PC-9 (cell line): ENCODE measurements at regions of chr3 and their contacts with region 1.

Region 1: GRCh38 chr3:196108083-196108743 is 26.3 kb upstream of the TFRC start:
- DNase-seq: peak; percentile 94 to 99
- H3K4me3 ChIP-seq: peak overlapping the region; percentile 36; the same call in 1 of the 2 replicates
- H3K27ac ChIP-seq: peak overlapping the region; percentile 94
- H3K4me1 ChIP-seq: peaks cover 52% of the 10 kb centered on the region
- H3K27me3 ChIP-seq: no peaks in the 10 kb centered on the region
- CTCF ChIP-seq: no peak; the same call in 1 of the 2 replicates

Region 2: GRCh38 chr3:196081791-196082618 is 26.2 kb before region 1 on chr3 and contains the start of gene TFRC:
- CTCF ChIA-PET with region 1: interaction called, 8 read pairs
- POLR2A ChIA-PET with region 1: interaction called, 3 read pairs
- intact Hi-C with region 1: loop called (anchors 1 kb)
- DNase-seq: peak; percentile 94 to 98
- H3K4me3 ChIP-seq: peak within 1 kb of the TSS; percentile 77
- H3K27ac ChIP-seq: peak within 1 kb of the TSS; percentile 76
- H3K4me1 ChIP-seq: peaks cover 28% of the 10 kb centered on the region
- H3K27me3 ChIP-seq: no peaks in the 10 kb centered on the region
- CTCF ChIP-seq: no peak
- total RNA-seq, gene TFRC: 134 and 195 TPM in 2 replicates

Region 3: GRCh38 chr3:196127295-196128040 is 19.3 kb after region 1 on chr3:
- CTCF ChIA-PET with region 1: interaction called, 4 read pairs
- POLR2A ChIA-PET with region 1: interaction called, 25 read pairs
- intact Hi-C with region 1: no loop called
- DNase-seq: peak; percentile 51 to 54
- H3K4me3 ChIP-seq: no peak overlapping the region
- H3K27ac ChIP-seq: peak overlapping the region; percentile 66
- H3K4me1 ChIP-seq: peaks cover 26% of the 10 kb centered on the region
- H3K27me3 ChIP-seq: no peaks in the 10 kb centered on the region
- CTCF ChIP-seq: no peak

Region 4: DNA sequence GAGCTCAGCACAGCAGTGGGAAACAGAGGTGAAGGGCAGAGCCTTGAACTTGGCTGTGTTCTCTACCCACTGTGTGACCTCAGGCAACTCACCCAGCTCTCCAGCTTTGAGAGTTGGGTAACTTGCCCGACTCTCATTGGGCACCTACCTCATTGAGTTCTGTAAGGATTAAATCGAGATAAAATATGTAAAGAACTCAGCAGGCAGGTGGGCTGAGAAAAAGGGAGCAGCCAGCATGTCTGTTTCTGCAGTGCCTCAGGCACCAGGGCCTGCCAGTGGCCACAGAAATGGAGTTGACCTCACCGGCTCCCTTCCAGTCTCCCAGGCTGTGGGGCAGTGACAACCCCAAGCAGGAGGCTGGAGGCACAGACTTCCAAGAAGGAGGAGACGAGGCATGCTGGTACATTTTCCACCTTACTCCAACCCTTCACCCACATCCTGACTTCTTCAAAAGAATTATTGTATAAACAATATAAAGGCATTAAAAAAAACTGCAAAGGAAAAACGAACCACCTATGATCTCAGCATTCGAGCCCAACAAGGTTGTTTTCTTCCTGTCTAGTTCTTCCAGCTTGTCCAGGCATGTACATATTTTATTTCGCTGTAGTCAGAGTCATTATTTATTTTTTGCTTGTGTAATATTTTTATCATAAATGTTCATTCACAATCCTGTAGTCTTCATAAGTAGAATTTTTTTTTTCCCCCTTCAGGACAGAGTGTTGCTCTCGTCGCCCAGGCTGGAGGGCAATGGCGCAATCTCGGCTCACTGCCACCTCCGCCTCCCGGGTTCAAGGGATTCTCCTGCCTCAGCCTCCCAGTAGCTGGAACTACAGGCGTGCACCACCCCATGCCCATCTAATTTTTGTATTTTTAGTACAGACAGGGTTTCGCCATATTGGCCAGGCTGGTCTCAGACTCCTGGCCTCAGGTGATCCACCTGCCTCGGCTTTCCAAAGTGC is 28.1 kb after region 1 on chr3:
- CTCF ChIA-PET with region 1: interaction called, 5 read pairs
- POLR2A ChIA-PET with region 1: interaction called, 9 read pairs
- intact Hi-C with region 1: loop called (anchors 1 kb)
- DNase-seq: peak; percentile 90 to 99
- H3K4me3 ChIP-seq: peak overlapping the region; percentile 15; the same call in 1 of the 2 replicates
- H3K27ac ChIP-seq: peak overlapping the region; percentile 85
- H3K4me1 ChIP-seq: peaks cover 70% of the 10 kb centered on the region
- H3K27me3 ChIP-seq: no peaks in the 10 kb centered on the region
- CTCF ChIP-seq: no peak

Region 5: GRCh38 chr3:196142202-196142956 is 34.2 kb after region 1 on chr3:
- CTCF ChIA-PET with region 1: interaction called, 6 read pairs
- POLR2A ChIA-PET with region 1: interaction called, 10 read pairs
- intact Hi-C with region 1: loop called (anchors 1 kb)
- DNase-seq: peak; percentile 87 to 92
- H3K4me3 ChIP-seq: peak overlapping the region; percentile 58
- H3K27ac ChIP-seq: peak overlapping the region; percentile 81
- H3K4me1 ChIP-seq: peaks cover 89% of the 10 kb centered on the region
- H3K27me3 ChIP-seq: no peaks in the 10 kb centered on the region
- CTCF ChIP-seq: 0 out of 2 replicates have a peak, but pooled peaks have one; percentile 16

Region 6: DNA sequence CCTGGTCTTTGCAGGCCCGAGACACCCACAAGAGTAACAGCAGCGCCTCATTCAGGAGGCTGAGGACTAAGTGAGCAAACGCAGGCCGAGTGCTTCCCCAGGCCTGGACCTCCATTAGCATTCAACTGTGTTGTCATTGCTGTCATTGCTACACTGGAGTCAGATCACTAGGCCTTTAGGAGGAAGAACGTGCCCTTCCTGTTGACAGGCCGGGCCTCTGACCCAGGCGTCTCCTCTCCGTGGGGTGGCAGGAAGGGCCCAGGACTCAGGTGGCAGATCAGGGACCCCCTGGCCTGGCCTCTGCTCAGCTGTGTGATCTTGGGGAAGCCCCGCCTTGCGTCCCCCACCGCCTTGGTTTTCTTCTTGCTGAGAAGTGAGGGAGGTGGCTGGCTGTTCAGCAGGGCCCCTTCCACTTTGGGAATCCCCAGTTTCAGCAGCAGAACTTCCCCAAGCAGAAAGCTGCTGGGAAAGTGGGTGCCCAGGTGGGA is 83.9 kb after region 1 on chr3:
- CTCF ChIA-PET with region 1: interaction called, 3 read pairs
- POLR2A ChIA-PET with region 1: no interaction called
- intact Hi-C with region 1: loop called (anchors 1 kb)
- DNase-seq: no peak
- H3K4me3 ChIP-seq: no peak overlapping the region
- H3K27ac ChIP-seq: no peak overlapping the region
- H3K4me1 ChIP-seq: peaks cover 14% of the 10 kb centered on the region
- H3K27me3 ChIP-seq: no peaks in the 10 kb centered on the region
- CTCF ChIP-seq: no peak; the same call in 1 of the 2 replicates